ENCODE measurements at regions of chr3 and their contacts with region 1.

Region 1: GRCh38 chr3:179750720-179751328 is 98.0 kb downstream of the USP13 start:
- DNase-seq: peak; percentile 14 to 46 (median 43)
- H3K4me3 ChIP-seq: no peak overlapping the region
- H3K27ac ChIP-seq: no peak overlapping the region
- H3K4me1 ChIP-seq: no peaks in the 10 kb centered on the region
- H3K27me3 ChIP-seq: no peaks in the 10 kb centered on the region

Region 2: DNA sequence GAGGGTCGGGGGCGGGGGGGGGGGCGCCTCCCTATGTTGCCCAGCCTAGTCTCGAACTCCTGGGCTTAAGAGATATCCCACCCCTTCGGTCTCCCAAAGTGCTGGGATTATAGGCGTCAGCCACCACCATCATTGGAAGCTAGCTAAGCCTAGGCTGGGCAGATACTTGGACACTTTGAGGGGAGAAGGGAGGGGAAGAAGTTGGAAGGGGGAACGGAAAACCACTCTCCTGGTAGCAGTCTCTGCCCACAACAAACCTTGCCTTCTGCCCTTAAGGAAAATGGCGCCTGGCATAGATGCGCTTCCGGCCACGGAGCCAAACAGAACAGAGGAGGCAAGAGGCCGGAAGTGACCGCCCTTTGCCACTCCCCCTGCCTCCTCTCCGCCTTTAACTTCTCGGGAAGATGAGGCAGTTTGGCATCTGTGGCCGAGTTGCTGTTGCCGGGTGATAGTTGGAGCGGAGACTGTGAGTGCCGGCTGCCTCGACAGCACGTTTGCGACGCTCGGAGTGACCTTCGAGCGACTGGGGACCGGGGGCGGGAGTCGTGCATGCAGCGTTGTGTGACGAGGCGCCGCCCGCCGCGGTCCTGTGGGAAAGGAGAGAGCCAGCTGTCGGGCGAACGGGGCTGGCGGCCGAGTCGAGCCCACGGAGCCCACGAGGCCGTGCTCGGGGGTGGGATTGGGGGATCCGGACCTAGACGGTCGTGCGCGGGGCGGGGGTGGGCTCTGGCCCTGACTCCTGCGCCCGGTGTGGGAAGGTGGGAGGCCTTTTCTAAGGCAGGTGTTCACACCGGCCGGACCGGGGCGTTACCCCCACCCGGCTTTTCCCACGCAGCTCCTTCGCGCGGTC is 403.3 kb before region 1 on chr3 and contains the start of gene MFN1:
- CTCF ChIA-PET with region 1: no interaction called
- POLR2A ChIA-PET with region 1: no interaction called
- DNase-seq: peak; percentile 94 to 97 (median 95)
- H3K4me3 ChIP-seq: peak within 1 kb of the TSS; percentile 84 to 99 (median 94)
- H3K27ac ChIP-seq: peak within 1 kb of the TSS; percentile 33 to 78
- H3K4me1 ChIP-seq: peaks cover 2 to 13% (median 9%) of the 10 kb centered on the region in 4 experiments
- H3K27me3 ChIP-seq: no peaks in the 10 kb centered on the region

Region 3: DNA sequence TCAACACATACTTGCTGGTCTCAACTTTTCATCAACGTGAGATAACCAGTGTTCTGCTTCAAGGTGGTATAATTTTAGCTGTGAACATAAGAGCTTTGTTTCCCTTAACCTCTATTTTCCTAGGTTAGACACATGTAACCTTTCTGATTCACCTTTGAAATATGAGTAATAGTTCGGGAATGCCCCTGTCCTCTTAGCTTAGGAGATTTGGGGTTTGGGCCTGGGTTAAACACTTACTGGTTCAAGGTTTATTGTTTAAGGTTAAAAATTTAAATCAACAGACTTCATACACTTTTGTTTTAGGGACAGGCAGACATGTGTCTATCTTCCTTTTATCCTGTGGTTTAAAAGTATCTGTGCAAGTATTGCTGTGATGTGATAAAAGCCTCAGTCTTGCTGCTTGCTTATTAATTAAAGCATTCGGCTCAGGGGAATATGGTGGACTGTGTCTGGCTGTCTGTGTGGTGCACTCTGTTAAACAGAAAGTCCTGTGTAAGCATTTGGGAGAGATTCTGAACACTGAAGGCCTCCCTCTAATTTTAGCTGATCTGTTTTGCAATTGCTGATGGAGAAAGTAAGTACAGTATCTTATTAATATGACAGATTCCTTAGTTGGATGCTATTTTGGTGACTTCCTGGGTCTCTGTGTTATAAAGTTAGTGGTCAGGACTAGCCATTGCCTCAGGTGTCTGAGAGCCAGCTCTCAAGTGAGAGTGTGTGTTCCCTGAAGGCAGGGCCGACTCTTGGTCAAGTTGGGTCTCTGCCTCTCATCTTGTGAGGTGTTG is 16.1 kb before region 1 on chr3:
- CTCF ChIA-PET with region 1: interaction called, 11 read pairs
- POLR2A ChIA-PET with region 1: no interaction called
- DNase-seq: no peak
- H3K4me3 ChIP-seq: no peak overlapping the region
- H3K27ac ChIP-seq: no peak overlapping the region
- H3K4me1 ChIP-seq: no peaks in the 10 kb centered on the region
- H3K27me3 ChIP-seq: no peaks in the 10 kb centered on the region

Region 4: DNA sequence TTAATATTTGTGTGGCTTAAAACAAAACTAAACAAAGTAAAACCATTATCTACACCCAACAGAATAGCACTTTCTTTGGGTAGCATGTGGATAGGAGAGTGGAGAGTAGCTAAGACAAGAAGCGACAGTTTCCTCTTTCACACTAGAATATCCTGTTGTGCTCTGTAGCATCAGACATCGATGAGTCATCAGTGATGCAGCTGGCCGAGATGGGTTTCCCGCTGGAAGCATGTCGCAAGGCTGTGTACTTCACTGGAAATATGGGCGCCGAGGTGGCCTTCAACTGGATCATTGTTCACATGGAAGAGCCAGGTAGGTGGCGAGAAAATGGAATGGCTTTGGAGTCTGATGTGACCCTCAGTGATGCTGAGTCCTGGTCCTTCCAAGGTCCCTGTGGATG is 10.1 kb after region 1 on chr3:
- CTCF ChIA-PET with region 1: interaction called, 12 read pairs
- POLR2A ChIA-PET with region 1: interaction called, 4 read pairs
- DNase-seq: no peak
- H3K4me3 ChIP-seq: no peak overlapping the region
- H3K27ac ChIP-seq: no peak overlapping the region
- H3K4me1 ChIP-seq: no peaks in the 10 kb centered on the region
- H3K27me3 ChIP-seq: no peaks in the 10 kb centered on the region